PC-9 (cell line): ENCODE measurements at regions of chr7 and their contacts with region 1.

Region 1: GRCh38 chr7:80060218-80060806 is 74.3 kb upstream of the GNAI1 start:
- DNase-seq: peak in 1 of 2 experiments; percentile 58
- H3K4me3 ChIP-seq: no peak overlapping the region
- H3K27ac ChIP-seq: no peak overlapping the region
- H3K4me1 ChIP-seq: no peaks in the 10 kb centered on the region
- H3K27me3 ChIP-seq: no peaks in the 10 kb centered on the region
- CTCF ChIP-seq: peak; percentile 88

Region 2: GRCh38 chr7:80095545-80095944 is 35.2 kb after region 1 on chr7:
- CTCF ChIA-PET with region 1: no interaction called
- POLR2A ChIA-PET with region 1: no interaction called
- intact Hi-C with region 1: loop called (anchors 2 kb)
- DNase-seq: no peak
- H3K4me3 ChIP-seq: no peak overlapping the region
- H3K27ac ChIP-seq: no peak overlapping the region
- H3K4me1 ChIP-seq: peaks cover 8% of the 10 kb centered on the region
- H3K27me3 ChIP-seq: no peaks in the 10 kb centered on the region
- CTCF ChIP-seq: peak; percentile 66

Region 3: GRCh38 chr7:80392229-80393169 is 332.2 kb after region 1 on chr7:
- CTCF ChIA-PET with region 1: interaction called, 3 read pairs
- POLR2A ChIA-PET with region 1: interaction called, 3 read pairs
- intact Hi-C with region 1: loop called (anchors 2 kb)
- DNase-seq: peak in 1 of 2 experiments; percentile 48
- H3K4me3 ChIP-seq: no peak overlapping the region
- H3K27ac ChIP-seq: no peak overlapping the region
- H3K4me1 ChIP-seq: no peaks in the 10 kb centered on the region
- H3K27me3 ChIP-seq: no peaks in the 10 kb centered on the region
- CTCF ChIP-seq: peak; percentile 75

Region 4: GRCh38 chr7:80453699-80454340 is 393.5 kb after region 1 on chr7:
- CTCF ChIA-PET with region 1: no interaction called
- POLR2A ChIA-PET with region 1: no interaction called
- intact Hi-C with region 1: loop called (anchors 1 kb)
- DNase-seq: no peak
- H3K4me3 ChIP-seq: no peak overlapping the region
- H3K27ac ChIP-seq: no peak overlapping the region
- H3K4me1 ChIP-seq: no peaks in the 10 kb centered on the region; the same call in 1 of the 2 replicates
- H3K27me3 ChIP-seq: no peaks in the 10 kb centered on the region
- CTCF ChIP-seq: peak; percentile 73

Region 5: DNA sequence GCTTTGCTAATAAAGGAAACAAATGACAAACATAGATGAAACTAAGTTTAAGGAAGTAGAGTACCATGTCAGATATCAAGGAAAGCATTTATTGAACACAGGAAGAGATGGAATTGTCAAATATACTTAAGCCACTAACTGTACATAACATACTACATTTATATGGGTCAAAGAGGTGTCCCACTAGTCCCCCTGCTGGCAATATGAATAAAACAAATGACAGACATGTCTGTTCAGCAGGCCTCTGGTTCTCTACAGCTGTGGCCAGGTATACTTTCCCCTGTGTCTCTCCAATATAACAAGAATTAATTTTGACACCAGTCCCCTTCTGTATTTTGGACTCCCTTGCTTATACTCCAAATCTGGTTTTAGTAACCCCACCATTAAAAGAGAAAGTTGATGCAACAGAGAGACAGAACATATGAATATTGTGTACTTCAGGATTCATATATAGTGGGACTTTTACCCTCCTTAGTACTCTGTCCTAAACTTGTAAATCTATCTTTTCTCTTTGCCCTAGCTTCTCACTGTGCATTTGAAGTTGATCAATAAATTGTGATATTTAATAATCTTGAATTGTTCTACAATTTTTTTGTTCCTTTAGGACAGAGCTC is 621.1 kb after region 1 on chr7:
- CTCF ChIA-PET with region 1: no interaction called
- POLR2A ChIA-PET with region 1: no interaction called
- intact Hi-C with region 1: loop called (anchors 5 kb)
- DNase-seq: peak in 1 of 2 experiments; percentile 5
- H3K4me3 ChIP-seq: no peak overlapping the region
- H3K27ac ChIP-seq: no peak overlapping the region
- H3K4me1 ChIP-seq: no peaks in the 10 kb centered on the region
- H3K27me3 ChIP-seq: no peaks in the 10 kb centered on the region
- CTCF ChIP-seq: peak; percentile 72

Region 6: GRCh38 chr7:81469869-81470723 is 1409.8 kb after region 1 on chr7:
- CTCF ChIA-PET with region 1: no interaction called
- POLR2A ChIA-PET with region 1: no interaction called
- intact Hi-C with region 1: loop called (anchors 1 kb)
- DNase-seq: peak; percentile 50 to 65
- H3K4me3 ChIP-seq: no peak overlapping the region
- H3K27ac ChIP-seq: no peak overlapping the region
- H3K4me1 ChIP-seq: no peaks in the 10 kb centered on the region
- H3K27me3 ChIP-seq: no peaks in the 10 kb centered on the region
- CTCF ChIP-seq: peak; percentile 81